Posterior vena cava (tissue), 2 donors: ENCODE measurements at regions of chr6 and their contacts with region 1.

Region 1: DNA sequence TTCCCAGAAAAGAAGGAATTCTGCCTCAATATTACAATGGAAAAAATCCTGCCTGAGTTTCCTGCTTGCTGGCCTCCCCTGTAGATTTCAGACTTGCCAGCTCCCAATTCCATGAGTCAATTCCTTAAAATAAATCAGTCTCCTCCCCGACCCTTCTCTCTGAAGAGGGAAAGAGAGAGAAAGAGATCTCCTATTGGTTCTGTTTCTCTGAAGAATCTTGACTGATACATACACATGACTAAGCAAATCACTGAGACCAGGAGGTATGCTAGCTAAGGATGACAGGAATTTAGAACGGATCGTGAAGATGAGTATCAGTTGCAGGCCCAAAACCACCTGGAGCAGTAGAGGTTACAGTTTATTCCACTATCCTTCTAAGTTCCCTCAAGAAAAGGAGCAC is 11.3 kb upstream of the RBM24 start:
- DNase-seq: no peak

Region 2: GRCh38 chr6:17149571-17149970 is 120.3 kb before region 1 on chr6:
- intact Hi-C with region 1: no loop called
- DNase-seq: no peak

Region 3: DNA sequence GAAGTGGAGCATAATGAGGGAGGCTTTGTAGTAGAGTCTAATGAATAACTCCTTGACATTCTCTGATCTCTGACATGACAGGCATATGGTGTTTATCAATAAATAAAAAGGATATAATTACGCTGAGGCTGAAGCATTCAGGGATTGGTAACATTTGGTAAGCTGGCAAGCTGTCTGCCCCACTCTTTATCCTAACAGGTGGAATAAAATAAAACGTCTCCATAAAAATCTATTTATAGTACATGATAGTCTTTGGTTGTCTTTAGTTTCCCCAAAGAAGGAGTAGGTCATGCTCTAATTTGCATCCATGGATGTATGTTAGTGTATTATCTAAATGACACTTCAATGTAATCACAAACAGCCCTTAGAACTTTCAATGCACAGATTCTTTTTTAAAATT is 19.6 kb before region 1 on chr6:
- intact Hi-C with region 1: loop called in 1 of 2 experiments (anchors 1 kb)
- DNase-seq: no peak